Activated CD4-positive, alpha-beta T cell treated with anti-CD3 and anti-CD28 coated beads, Interleukin-2, amount 10 ng/mL, durations not matched to agents 7 days and 5 days (primary cell): ENCODE measurements at regions of chr4 and their contacts with region 1.

Region 1: DNA sequence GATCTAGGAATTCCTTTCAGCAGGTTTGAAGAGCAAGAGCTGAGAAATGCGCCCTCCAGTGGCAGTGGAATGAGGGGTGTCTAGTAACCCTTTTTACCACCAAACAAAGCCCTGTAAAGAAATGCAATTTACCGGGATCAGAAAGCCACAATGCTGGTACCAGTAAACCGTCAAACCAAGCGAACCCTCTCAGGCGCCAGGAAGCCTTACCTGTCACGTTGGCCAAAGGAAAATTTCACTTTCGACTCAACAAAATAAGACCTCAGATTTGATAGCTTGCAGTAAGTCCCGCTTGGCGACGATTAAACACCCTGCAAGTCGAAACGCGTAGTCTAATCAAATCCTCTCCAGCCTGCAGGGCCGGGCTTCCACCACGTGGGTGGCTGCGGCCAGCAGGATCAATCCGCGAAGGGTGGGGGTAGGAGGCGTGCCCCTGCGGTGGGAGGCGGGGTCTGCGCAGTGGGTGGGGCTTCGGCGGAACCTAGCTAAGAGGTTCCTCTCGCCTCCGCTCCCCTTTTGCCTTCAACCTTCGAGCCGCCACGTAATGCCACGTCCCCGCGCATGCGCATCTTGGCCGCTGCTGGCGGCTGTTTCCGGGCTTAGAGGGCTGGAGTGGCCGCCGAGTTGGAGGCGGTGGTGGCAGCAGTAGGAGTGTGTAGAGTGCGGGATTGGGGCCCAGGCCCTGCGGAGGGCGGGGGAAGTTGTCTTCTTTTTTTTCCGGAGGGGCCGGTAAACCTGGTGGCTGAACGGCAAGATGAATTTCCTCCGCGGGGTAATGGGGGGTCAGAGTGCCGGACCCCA is at the start of gene USO1:
- DNase-seq: peak; percentile 98
- H3K4me3 Mint-ChIP-seq: peak within 1 kb of the TSS; percentile 98
- H3K27ac Mint-ChIP-seq: peak within 1 kb of the TSS; percentile 98
- H3K4me1 Mint-ChIP-seq: peaks cover 51% of the 10 kb centered on the region
- H3K27me3 Mint-ChIP-seq: no peaks in the 10 kb centered on the region
- total RNA-seq, gene USO1: 38.9 to 43.5 TPM

Region 2: DNA sequence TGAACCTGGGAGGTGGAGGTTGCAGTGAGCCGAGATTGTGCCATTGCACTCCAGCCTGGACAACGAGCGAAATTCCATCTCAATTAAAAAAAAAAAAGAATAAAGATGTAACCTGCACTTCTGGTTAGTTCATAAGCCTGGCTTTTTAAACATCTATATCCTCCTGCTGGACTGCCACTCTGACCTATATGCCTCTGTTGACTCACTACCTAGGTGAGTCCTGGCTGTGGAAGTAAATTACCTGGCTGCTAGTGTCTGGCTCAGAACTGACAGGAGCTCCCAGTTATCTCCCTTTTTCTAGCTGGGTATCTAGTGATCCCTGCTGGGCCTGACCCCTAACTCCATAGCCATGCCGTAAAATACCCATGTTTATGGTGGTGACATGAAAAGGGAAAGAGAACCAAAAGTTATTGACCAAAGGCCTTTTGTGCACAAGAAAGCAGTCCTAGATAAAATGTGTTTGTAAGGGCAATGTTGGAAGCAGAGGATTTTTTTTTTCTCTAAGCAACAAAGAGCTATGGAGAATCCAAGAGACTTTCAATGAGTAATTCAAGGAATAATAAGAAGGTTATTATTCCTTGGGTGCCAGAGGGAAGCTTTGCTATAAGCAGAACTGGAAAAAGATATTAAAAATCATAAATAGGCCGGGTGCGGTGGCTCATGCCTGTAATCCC is 40.6 kb before region 1 on chr4:
- CTCF ChIA-PET with region 1: interaction called, 11 read pairs
- POLR2A ChIA-PET with region 1: interaction called, 3 read pairs
- DNase-seq: no peak
- H3K4me3 Mint-ChIP-seq: no peak overlapping the region
- H3K27ac Mint-ChIP-seq: no peak overlapping the region
- H3K4me1 Mint-ChIP-seq: peaks cover 39% of the 10 kb centered on the region
- H3K27me3 Mint-ChIP-seq: no peaks in the 10 kb centered on the region

Region 3: DNA sequence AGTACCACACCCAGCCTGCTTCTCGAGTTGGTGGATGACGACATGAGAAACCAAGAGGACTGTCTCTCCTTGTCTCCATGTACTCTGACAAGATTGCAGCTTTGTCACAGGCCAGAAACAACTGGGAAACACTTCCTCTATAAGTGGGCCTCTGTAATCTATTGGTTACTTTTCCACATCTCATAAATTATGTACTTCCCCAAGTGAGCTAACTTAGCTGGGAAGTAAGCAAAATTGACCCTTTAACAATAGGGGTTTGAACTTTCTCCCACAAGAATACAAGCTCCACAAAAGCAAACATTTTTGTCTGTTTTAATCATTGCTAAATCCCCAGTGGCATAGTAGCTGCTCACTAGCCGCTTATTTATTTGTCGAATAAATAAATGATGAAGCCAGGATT is 14.0 kb before region 1 on chr4:
- CTCF ChIA-PET with region 1: interaction called, 34 read pairs
- POLR2A ChIA-PET with region 1: no interaction called
- DNase-seq: no peak
- H3K4me3 Mint-ChIP-seq: no peak overlapping the region
- H3K27ac Mint-ChIP-seq: no peak overlapping the region
- H3K4me1 Mint-ChIP-seq: peaks cover 23% of the 10 kb centered on the region
- H3K27me3 Mint-ChIP-seq: no peaks in the 10 kb centered on the region

Region 4: GRCh38 chr4:75745161-75745560 is 20.9 kb after region 1 on chr4:
- CTCF ChIA-PET with region 1: interaction called, 12 read pairs
- POLR2A ChIA-PET with region 1: no interaction called
- DNase-seq: no peak
- H3K4me3 Mint-ChIP-seq: no peak overlapping the region
- H3K27ac Mint-ChIP-seq: no peak overlapping the region
- H3K4me1 Mint-ChIP-seq: peaks cover 1% of the 10 kb centered on the region
- H3K27me3 Mint-ChIP-seq: no peaks in the 10 kb centered on the region

Region 5: DNA sequence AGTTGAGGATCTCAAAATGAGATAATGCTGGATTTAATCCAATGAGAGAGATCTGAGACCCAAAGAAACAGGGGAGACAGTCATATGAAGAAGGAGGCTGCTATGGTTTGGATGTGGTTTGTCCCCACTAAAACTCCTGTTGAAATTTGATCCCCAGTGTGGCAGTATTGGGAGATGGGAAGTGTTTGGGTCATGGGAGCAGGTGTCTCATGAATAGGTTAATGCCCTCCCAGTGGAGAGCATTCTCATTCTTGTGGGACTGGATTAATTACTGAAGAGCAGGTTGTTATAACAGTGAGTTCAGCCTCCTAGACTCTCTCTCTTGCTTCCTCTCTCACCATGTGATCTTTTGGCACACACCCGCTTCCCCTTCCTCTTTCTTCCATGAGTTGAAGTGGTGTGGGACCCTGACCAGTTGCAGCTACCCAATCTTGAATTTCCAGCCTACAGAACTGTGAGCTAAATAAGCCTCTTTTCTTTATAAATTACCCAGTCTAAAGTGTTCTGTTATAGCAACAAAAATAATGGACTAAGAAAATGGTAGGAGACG is 107.7 kb after region 1 on chr4:
- CTCF ChIA-PET with region 1: no interaction called
- POLR2A ChIA-PET with region 1: interaction called, 10 read pairs
- DNase-seq: no peak
- H3K4me3 Mint-ChIP-seq: no peak overlapping the region
- H3K27ac Mint-ChIP-seq: no peak overlapping the region
- H3K4me1 Mint-ChIP-seq: peaks cover 4% of the 10 kb centered on the region
- H3K27me3 Mint-ChIP-seq: peaks cover 3% of the 10 kb centered on the region